H1 (cell line): ENCODE measurements at regions of chr22 and their contacts with region 1.

Region 1: GRCh38 chr22:26658671-26659478 is 1.5 kb downstream of the MIAT start:
- DNase-seq: peak; percentile 85
- H3K4me3 ChIP-seq: peak overlapping the region; percentile 71 to 96 (median 82)
- H3K27ac ChIP-seq: peak overlapping the region; percentile 46; the same call in 1 of the 2 replicates
- H3K4me1 ChIP-seq: peaks cover 10 to 21% (median 13%) of the 10 kb centered on the region in 4 experiments
- H3K27me3 ChIP-seq: no peaks in the 10 kb centered on the region; a peak in 1 of 7 replicates
- CTCF ChIP-seq: no peak
- EP300 ChIP-seq: no peak
- POLR2A ChIP-seq: peak in 1 of 2 experiments; percentile 58; a peak in 2 of 3 replicates
- RAD21 ChIP-seq: 0 out of 4 replicates have a peak, but pooled peaks of 1 of the 2 experiments have one; percentile 2

Region 2: GRCh38 chr22:26672590-26673468 is 14.0 kb after region 1 on chr22:
- CTCF ChIA-PET with region 1: interaction called, 6 read pairs
- POLR2A ChIA-PET with region 1: interaction called, 43 read pairs
- DNase-seq: peak; percentile 80 to 94
- H3K4me3 ChIP-seq: peak overlapping the region; percentile 70 to 81 (median 71)
- H3K27ac ChIP-seq: peak overlapping the region; percentile 79
- H3K4me1 ChIP-seq: peaks cover 4 to 24% (median 18%) of the 10 kb centered on the region in 4 experiments
- H3K27me3 ChIP-seq: no peaks in the 10 kb centered on the region
- CTCF ChIP-seq: peak; percentile 51 to 76 (median 68)
- EP300 ChIP-seq: no peak
- POLR2A ChIP-seq: peak; percentile 75 to 85
- RAD21 ChIP-seq: peak in 1 of 2 experiments; percentile 31; a peak in 2 of 4 replicates

Region 3: DNA sequence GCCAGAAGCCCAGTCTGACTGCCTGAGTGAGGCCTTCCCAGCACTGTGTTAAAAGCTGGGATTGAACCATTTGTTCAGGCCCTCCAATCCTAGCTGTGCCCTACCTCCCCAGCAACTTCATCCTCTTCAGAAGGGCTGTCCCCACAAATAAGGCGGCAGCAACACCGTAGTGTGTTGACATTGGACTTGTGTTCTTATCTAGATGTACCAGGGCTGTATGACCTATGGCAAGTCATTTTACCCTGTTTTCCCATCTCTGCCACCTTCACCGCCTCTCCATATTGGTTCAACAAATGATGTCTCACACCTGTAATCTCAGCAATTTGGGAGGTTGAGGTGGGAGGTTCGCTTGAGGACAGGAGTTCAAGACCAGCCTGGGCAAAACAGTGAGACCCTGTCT is 25.8 kb after region 1 on chr22:
- CTCF ChIA-PET with region 1: no interaction called
- POLR2A ChIA-PET with region 1: no interaction called
- DNase-seq: no peak
- H3K4me3 ChIP-seq: no peak overlapping the region
- H3K27ac ChIP-seq: no peak overlapping the region
- H3K4me1 ChIP-seq: peaks cover 7 to 12% (median 10%) of the 10 kb centered on the region in 4 experiments
- H3K27me3 ChIP-seq: no peaks in the 10 kb centered on the region
- CTCF ChIP-seq: no peak
- EP300 ChIP-seq: no peak
- POLR2A ChIP-seq: no peak
- RAD21 ChIP-seq: no peak